BJ (cell line): ENCODE measurements at regions of chr7 and their contacts with region 1.

Region 1: GRCh38 chr7:50467817-50468610 is 17.9 kb upstream of the FIGNL1 start:
- DNase-seq: no peak
- H3K4me3 ChIP-seq: no peak overlapping the region
- H3K27me3 ChIP-seq: 0 out of 2 replicates have a peak, but pooled peaks cover 1% of the 10 kb centered on the region
- CTCF ChIP-seq: peak; percentile 92

Region 2: GRCh38 chr7:50455658-50456057 is 12.4 kb before region 1 on chr7:
- CTCF ChIA-PET with region 1: interaction called, 14 read pairs
- POLR2A ChIA-PET with region 1: no interaction called
- DNase-seq: no peak
- H3K4me3 ChIP-seq: no peak overlapping the region
- H3K27me3 ChIP-seq: peaks cover 3% of the 10 kb centered on the region
- CTCF ChIP-seq: no peak

Region 3: GRCh38 chr7:50632561-50633413 is 164.8 kb after region 1 on chr7:
- CTCF ChIA-PET with region 1: interaction called, 24 read pairs
- POLR2A ChIA-PET with region 1: no interaction called
- DNase-seq: no peak
- H3K4me3 ChIP-seq: no peak overlapping the region
- H3K27me3 ChIP-seq: no peaks in the 10 kb centered on the region
- CTCF ChIP-seq: peak; percentile 89

Region 4: DNA sequence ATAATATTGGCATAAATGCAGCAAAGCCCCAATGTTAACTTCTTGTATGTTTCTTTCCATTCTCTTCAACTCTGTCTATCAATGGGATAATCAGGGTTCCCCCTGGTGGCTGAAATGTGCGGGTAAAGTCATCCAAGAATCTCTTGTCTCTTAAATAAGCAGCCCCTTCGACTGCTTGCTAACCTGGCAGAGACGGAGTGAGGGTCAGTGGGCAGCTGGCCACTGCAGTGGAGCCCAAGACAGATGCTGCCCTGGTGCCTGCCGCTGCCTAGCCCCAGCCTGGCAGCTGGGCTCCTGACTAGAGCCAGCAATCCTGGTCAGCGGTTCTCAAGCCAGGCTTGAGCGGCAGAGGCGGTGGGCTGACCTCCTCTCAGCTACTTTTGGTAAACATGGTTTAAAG is 599.7 kb after region 1 on chr7:
- CTCF ChIA-PET with region 1: interaction called, 16 read pairs
- POLR2A ChIA-PET with region 1: no interaction called
- DNase-seq: peak; percentile 14
- H3K4me3 ChIP-seq: no peak overlapping the region
- H3K27me3 ChIP-seq: no peaks in the 10 kb centered on the region
- CTCF ChIP-seq: peak; percentile 79

Region 5: DNA sequence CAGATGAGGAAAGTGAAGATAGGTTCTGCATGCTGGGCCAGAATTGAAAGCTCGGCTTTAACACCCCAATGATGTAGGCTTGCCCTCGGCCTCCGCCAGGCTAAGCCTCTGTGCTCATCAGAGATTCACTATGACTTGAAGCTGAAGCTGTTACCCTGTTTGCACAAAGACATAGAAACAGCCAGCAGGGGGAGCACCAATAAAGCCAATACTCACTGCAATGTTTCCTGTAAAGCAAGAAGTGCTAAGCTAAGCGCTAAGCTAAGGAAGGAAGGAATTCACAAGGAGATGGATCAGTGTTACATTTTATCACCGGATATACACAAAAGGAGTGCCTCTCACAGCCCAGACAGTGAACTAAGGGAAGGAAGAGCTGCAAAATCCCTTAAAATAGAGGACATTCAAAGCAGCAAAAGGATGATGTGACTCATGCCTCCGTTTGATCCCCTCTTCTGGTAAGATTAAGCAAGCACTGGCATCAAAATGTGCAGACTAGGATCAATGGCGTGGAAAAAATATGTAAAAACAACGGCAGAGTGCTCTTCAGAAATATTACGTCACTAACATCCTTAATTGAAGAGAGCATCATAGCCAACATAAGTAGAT is 694.8 kb after region 1 on chr7:
- CTCF ChIA-PET with region 1: interaction called, 49 read pairs
- POLR2A ChIA-PET with region 1: no interaction called
- DNase-seq: peak; percentile 22
- H3K4me3 ChIP-seq: no peak overlapping the region
- H3K27me3 ChIP-seq: peaks cover 3% of the 10 kb centered on the region
- CTCF ChIP-seq: peak; percentile 94